ENCODE measurements at regions of chr16 and their contacts with region 1.

Region 1: DNA sequence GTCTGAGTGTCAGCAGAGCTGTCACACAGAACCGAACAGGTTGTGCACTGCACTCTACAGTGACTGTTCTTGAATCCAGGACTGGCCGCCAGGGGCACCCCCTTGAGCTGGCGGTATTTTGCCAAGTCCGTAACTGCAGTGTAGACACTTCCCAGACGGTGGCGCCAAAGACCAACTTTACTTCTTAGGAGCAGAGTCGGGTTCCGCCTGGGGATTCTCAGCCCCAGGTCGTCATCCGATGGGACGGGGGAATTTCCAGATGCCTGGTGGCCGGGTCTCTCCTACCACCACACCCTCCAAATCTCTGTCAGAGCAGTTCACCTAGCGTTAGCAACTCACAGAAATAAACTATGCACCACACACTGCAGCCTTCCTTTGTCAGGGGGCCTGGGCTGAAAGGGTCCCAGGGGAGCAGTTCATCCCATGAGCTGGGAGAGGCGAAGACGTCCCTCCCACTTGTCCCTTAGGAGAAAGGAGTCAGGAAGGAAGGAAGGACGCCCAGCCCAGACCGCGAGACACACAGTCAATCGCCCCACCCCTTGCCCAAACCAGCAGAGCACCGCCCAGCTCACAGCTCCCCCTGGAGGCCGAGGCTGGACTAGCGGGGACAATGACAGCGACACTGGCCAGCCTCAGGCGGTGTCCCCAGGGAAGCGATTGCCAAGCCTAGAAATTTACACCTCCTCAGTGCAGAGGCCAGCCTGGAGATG is 7.4 kb upstream of the RIPOR1 start:
- DNase-seq: peak; percentile 88 to 97 (median 93)
- ATAC-seq: peak; percentile 94
- H3K4me3 ChIP-seq: peak overlapping the region; percentile 92
- H3K4me3 Mint-ChIP-seq: peak overlapping the region; percentile 86 to 94 (median 92)
- H3K27ac ChIP-seq: peak overlapping the region; percentile 87
- H3K27ac Mint-ChIP-seq: peak overlapping the region; percentile 91 to 99 (median 96)
- H3K4me1 ChIP-seq: peaks cover 6 to 9% of the 10 kb centered on the region in 2 donors
- H3K4me1 Mint-ChIP-seq: peaks cover 14 to 35% (median 23%) of the 10 kb centered on the region in 7 donors
- H3K27me3 ChIP-seq: no peaks in the 10 kb centered on the region
- H3K27me3 Mint-ChIP-seq: peaks cover 0 to 28% (median 0%) of the 10 kb centered on the region in 5 donors

Region 2: GRCh38 chr16:67236563-67237395 is 284.5 kb before region 1 on chr16:
- CTCF ChIA-PET with region 1: no interaction called
- POLR2A ChIA-PET with region 1: no interaction called
- intact Hi-C with region 1: no loop called
- DNase-seq: peak; percentile 47 to 89 (median 53)
- ATAC-seq: peak; percentile 94
- H3K4me3 ChIP-seq: no peak overlapping the region
- H3K4me3 Mint-ChIP-seq: peak overlapping the region in 7 of 10 donors; percentile 18 to 61 (median 50)
- H3K27ac ChIP-seq: no peak overlapping the region
- H3K27ac Mint-ChIP-seq: peak overlapping the region in 7 of 9 donors; percentile 61 to 87 (median 77)
- H3K4me1 ChIP-seq: peaks cover 0 to 5% of the 10 kb centered on the region in 2 donors
- H3K4me1 Mint-ChIP-seq: peaks cover 0 to 21% (median 4%) of the 10 kb centered on the region in 7 donors
- H3K27me3 ChIP-seq: no peaks in the 10 kb centered on the region
- H3K27me3 Mint-ChIP-seq: no peaks in the 10 kb centered on the region

Region 3: GRCh38 chr16:67480833-67481560 is 40.3 kb before region 1 on chr16 and contains the start of gene ATP6V0D1:
- CTCF ChIA-PET with region 1: interaction called, 70 read pairs
- POLR2A ChIA-PET with region 1: interaction called, 8 read pairs
- intact Hi-C with region 1: loop called in 1 of 2 experiments (anchors 2 kb)
- DNase-seq: peak; percentile 97 to 100 (median 99)
- ATAC-seq: peak; percentile 94
- H3K4me3 ChIP-seq: peak within 1 kb of the TSS; percentile 92
- H3K4me3 Mint-ChIP-seq: peak within 1 kb of the TSS; percentile 95 to 100 (median 99)
- H3K27ac ChIP-seq: peak within 1 kb of the TSS; percentile 99
- H3K27ac Mint-ChIP-seq: peak within 1 kb of the TSS; percentile 95 to 99 (median 98)
- H3K4me1 ChIP-seq: peaks cover 15 to 25% of the 10 kb centered on the region in 2 donors
- H3K4me1 Mint-ChIP-seq: peaks cover 20 to 60% (median 37%) of the 10 kb centered on the region in 7 donors
- H3K27me3 ChIP-seq: no peaks in the 10 kb centered on the region
- H3K27me3 Mint-ChIP-seq: no peaks in the 10 kb centered on the region
- total RNA-seq, gene ATP6V0D1: 35.8 to 104 (median 54.7) TPM

Region 4: GRCh38 chr16:67537270-67537635 is 16.0 kb after region 1 on chr16:
- CTCF ChIA-PET with region 1: interaction called, 48 read pairs
- POLR2A ChIA-PET with region 1: interaction called, 10 read pairs
- intact Hi-C with region 1: loop called (anchors 1 to 2 kb)
- DNase-seq: peak in 2 of 9 donors; percentile 58 to 69
- ATAC-seq: peak; percentile 63
- H3K4me3 ChIP-seq: peak overlapping the region; percentile 68
- H3K4me3 Mint-ChIP-seq: peak overlapping the region; percentile 68 to 91 (median 85)
- H3K27ac ChIP-seq: peak overlapping the region; percentile 82
- H3K27ac Mint-ChIP-seq: peak overlapping the region; percentile 54 to 91 (median 82)
- H3K4me1 ChIP-seq: peaks cover 6% of the 10 kb centered on the region in 2 donors
- H3K4me1 Mint-ChIP-seq: peaks cover 29 to 51% (median 42%) of the 10 kb centered on the region in 7 donors
- H3K27me3 ChIP-seq: no peaks in the 10 kb centered on the region
- H3K27me3 Mint-ChIP-seq: peaks cover 0 to 42% (median 0%) of the 10 kb centered on the region in 5 donors

Region 5: GRCh38 chr16:67641779-67642708 is 120.8 kb after region 1 on chr16:
- CTCF ChIA-PET with region 1: interaction called, 36 read pairs
- POLR2A ChIA-PET with region 1: interaction called, 20 read pairs
- intact Hi-C with region 1: loop called (anchors 1 kb)
- DNase-seq: no peak
- ATAC-seq: no peak
- H3K4me3 ChIP-seq: no peak overlapping the region
- H3K4me3 Mint-ChIP-seq: no peak overlapping the region
- H3K27ac ChIP-seq: no peak overlapping the region
- H3K27ac Mint-ChIP-seq: peak overlapping the region in 2 of 9 donors; percentile 55 to 75
- H3K4me1 ChIP-seq: peaks cover 9 to 15% of the 10 kb centered on the region in 2 donors
- H3K4me1 Mint-ChIP-seq: peaks cover 0 to 24% (median 13%) of the 10 kb centered on the region in 7 donors
- H3K27me3 ChIP-seq: no peaks in the 10 kb centered on the region
- H3K27me3 Mint-ChIP-seq: no peaks in the 10 kb centered on the region

Region 6: DNA sequence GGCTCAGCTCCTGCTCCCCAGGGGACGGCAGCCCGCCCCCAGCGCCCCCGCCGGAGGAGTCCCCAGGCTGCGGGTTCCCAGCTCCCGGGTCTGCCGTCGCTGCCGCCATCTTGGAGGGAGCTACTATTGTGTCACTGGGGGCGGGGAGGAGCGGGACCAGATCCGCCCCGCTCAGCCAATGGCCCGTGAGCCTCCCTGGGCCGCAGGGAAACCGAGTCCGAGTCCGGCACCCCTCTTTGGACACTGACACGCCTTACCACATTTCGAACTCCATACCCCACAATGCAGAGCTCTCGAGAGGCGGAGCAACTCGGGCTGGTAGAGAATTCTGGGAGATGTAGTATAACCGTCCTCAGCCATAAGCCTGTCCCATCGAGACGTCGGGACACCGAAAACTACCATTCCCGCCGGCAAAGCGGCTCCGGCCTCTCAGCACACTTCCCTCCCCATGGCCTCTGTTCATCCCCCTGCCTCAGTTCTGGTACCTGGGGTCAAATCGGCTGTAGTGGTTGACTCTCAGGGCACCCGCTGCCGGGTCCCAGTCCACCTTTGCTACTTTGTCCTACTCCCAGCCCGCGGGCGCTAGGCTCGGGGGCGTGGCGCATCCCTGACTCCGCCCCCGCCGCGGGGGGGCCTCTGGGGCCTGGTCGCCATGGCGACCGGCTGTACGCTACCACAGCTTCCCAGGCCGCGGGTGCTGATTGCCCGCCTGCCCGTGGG is 285.3 kb after region 1 on chr16 and contains the starts of genes RANBP10 and TSNAXIP1:
- CTCF ChIA-PET with region 1: interaction called, 5 read pairs
- POLR2A ChIA-PET with region 1: interaction called, 5 read pairs
- intact Hi-C with region 1: loop called (anchors 1 kb)
- DNase-seq: peak; percentile 91 to 99 (median 97)
- ATAC-seq: peak; percentile 96
- H3K4me3 ChIP-seq: peak within 1 kb of the TSS; percentile 88
- H3K4me3 Mint-ChIP-seq: peak within 1 kb of the TSS; percentile 75 to 97 (median 94)
- H3K27ac ChIP-seq: peak within 1 kb of the TSS; percentile 89
- H3K27ac Mint-ChIP-seq: peak within 1 kb of the TSS; percentile 74 to 97 (median 95)
- H3K4me1 ChIP-seq: peaks cover 29 to 43% of the 10 kb centered on the region in 2 donors
- H3K4me1 Mint-ChIP-seq: peaks cover 13 to 49% (median 42%) of the 10 kb centered on the region in 7 donors
- H3K27me3 ChIP-seq: no peaks in the 10 kb centered on the region
- H3K27me3 Mint-ChIP-seq: peaks cover 0 to under 1% (median 0%) of the 10 kb centered on the region in 5 donors
- total RNA-seq, gene RANBP10: 22.3 to 26.6 (median 24.7) TPM
- total RNA-seq, gene TSNAXIP1: 0.24 to 1.1 (median 0.54) TPM

Region 7: DNA sequence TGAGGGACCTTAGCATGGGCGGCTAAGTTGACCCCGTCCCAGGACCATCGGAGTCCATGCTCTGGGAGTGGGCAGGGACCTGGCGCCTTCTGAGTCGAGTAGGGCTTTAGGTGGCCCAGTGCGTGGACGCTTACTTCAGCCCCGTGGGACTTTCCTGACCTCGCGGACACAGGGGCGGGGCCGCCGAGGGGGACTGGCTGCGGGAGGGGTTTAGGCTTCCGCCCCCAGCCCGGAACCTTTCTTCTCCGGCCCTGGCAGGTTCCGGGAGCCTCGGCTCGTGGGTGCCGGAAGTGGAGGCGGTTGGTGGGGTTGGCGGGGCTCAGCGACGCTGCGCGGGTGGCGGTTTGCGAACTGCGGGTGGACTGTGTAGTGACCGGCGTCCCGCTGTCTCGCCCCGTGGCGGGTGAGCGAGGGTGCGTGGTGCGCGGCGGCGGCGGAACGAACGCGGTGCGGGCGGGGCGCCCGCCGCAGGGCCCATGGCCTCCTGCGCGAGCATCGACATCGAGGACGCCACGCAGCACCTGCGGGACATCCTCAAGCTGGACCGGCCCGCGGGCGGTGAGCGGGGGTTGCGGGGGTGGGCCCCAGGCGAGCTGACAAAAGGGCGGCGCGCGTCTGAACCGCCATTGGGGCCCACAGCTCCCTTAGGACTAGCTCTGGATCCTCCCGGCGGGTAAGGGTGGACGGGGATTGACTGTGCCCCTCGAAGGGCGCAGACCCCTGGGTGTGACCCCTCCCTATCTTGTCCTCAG is 351.7 kb after region 1 on chr16 and contains the start of gene EDC4:
- CTCF ChIA-PET with region 1: no interaction called
- POLR2A ChIA-PET with region 1: no interaction called
- intact Hi-C with region 1: loop called (anchors 1 to 2 kb)
- DNase-seq: peak; percentile 75 to 96 (median 83)
- ATAC-seq: peak; percentile 96
- H3K4me3 ChIP-seq: peak within 1 kb of the TSS; percentile 88
- H3K4me3 Mint-ChIP-seq: peak within 1 kb of the TSS; percentile 88 to 96 (median 94)
- H3K27ac ChIP-seq: peak within 1 kb of the TSS; percentile 91
- H3K27ac Mint-ChIP-seq: peak within 1 kb of the TSS; percentile 90 to 97 (median 92)
- H3K4me1 ChIP-seq: peaks cover 19 to 30% of the 10 kb centered on the region in 2 donors
- H3K4me1 Mint-ChIP-seq: peaks cover 25 to 41% (median 36%) of the 10 kb centered on the region in 7 donors
- H3K27me3 ChIP-seq: no peaks in the 10 kb centered on the region
- H3K27me3 Mint-ChIP-seq: no peaks in the 10 kb centered on the region
- total RNA-seq, gene EDC4: 103 to 166 (median 122) TPM

Region 8: DNA sequence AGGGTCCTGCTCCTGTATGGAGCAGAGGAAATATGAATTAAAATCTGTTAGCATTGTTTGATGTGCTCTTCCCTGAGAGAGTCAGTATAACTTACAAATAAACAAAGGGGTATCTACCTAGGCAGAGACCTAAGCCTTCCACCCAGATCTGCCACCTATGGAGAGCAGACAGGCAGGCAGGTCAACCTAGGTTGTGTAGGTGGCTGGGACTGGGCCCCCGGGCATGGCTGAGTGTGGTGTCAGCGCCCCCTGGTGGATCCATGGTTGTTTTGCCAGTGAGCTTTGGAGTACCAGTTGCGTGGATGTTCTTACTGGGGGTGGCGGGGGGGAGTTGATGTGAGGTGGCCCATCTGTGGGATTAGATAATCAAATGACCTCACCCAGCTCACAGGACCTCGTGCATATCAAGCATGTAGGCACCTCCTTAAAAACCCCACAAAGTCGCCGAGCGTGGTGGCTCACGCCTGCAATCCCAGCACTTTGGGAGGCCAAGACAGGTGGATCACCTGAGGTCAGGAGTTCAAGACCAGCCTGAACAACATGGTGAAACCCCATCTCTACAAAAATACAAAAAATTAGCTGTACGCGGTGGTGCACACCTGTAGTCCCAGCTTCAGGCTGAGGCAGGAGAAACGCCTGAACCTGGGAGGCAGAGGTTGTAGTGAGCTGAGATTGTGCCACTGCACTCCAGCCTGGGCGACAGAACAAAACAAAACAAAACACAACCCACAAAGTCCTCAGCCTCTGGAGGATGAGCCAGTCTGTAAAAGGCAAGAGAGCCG is 519.4 kb after region 1 on chr16:
- CTCF ChIA-PET with region 1: interaction called, 3 read pairs
- POLR2A ChIA-PET with region 1: no interaction called
- intact Hi-C with region 1: loop called in 1 of 2 experiments (anchors 1 kb)
- DNase-seq: peak; percentile 81 to 95 (median 87)
- ATAC-seq: peak; percentile 100
- H3K4me3 ChIP-seq: no peak overlapping the region
- H3K4me3 Mint-ChIP-seq: peak overlapping the region in 1 of 10 donors; percentile 9
- H3K27ac ChIP-seq: peak overlapping the region; percentile 26
- H3K27ac Mint-ChIP-seq: peak overlapping the region; percentile 28 to 87 (median 61)
- H3K4me1 ChIP-seq: peaks cover 4 to 5% of the 10 kb centered on the region in 2 donors
- H3K4me1 Mint-ChIP-seq: peaks cover 5 to 26% (median 18%) of the 10 kb centered on the region in 7 donors
- H3K27me3 ChIP-seq: no peaks in the 10 kb centered on the region
- H3K27me3 Mint-ChIP-seq: no peaks in the 10 kb centered on the region